K562 (cell line): ENCODE measurements at regions of chr14 and their contacts with region 1.

Region 1: DNA sequence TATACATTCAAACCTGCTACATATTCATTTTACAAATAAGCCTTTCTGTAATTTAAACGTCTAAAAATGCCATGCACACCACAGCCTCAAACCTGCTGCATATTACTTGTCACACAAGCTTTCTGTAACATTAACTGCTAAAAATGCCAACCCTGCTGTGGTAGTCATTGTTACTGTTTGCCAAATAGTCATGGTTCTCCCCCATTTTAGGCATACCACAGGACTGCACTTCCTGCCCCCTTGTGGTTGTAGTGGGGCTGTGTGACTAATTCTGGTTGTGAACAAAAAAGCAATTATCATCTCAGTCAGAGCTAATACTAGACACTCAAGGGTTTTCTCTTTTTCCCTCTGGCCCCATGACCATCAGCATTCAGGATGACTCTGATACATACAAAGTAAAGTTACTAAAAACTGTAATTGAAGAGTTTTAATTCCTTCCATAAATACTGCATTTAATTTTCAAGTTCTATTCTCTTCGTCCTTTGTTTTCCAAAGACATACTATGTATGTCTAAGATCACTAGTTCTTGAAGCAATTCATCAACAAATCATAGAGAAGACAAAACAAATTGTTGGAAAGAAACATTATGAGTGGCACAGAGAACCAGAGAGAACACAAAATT is 5.7 kb upstream of the SLC35F4 start:
- DNase-seq: peak; percentile 7 to 27 (median 20)
- ATAC-seq: peak; percentile 81
- H3K4me3 ChIP-seq: no peak overlapping the region
- H3K27ac ChIP-seq: no peak overlapping the region
- H3K4me1 ChIP-seq: no peaks in the 10 kb centered on the region
- H3K27me3 ChIP-seq: no peaks in the 10 kb centered on the region
- CTCF ChIP-seq: peak; percentile 42 to 50 (median 45)
- EP300 ChIP-seq: no peak
- POLR2A ChIP-seq: no peak
- RAD21 ChIP-seq: peak in 1 of 2 experiments; percentile 32; a peak in 1 of 4 replicates

Region 2: DNA sequence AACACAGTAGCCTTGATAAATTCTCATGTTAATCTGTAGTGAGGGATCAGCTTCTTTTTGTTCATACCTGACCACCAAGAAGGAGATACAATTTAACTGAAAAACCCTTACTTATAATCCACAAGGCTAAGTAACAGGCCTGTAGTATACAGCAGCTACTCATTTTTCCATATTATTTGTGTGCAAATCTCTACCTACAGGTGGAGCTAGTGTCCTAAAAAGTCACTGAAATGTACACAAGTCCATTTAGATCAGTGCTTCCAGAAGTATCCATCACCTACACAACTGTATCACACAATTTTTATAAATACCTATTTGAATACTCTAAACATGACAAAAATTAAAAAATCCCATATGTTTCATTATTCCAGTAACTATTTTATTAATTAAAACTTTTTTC is 178.9 kb before region 1 on chr14:
- CTCF ChIA-PET with region 1: no interaction called
- POLR2A ChIA-PET with region 1: no interaction called
- in situ Hi-C with region 1: no loop called
- intact Hi-C with region 1: loop called (anchors 5 kb)
- DNase-seq: peak; percentile 6 to 20 (median 8)
- ATAC-seq: peak; percentile 46; the same call in 1 of the 3 replicates
- H3K4me3 ChIP-seq: no peak overlapping the region
- H3K27ac ChIP-seq: no peak overlapping the region
- H3K4me1 ChIP-seq: no peaks in the 10 kb centered on the region
- H3K27me3 ChIP-seq: no peaks in the 10 kb centered on the region
- CTCF ChIP-seq: peak in 2 of 3 experiments; percentile 18 to 37; a peak in 2 of 6 replicates
- EP300 ChIP-seq: no peak
- POLR2A ChIP-seq: no peak
- RAD21 ChIP-seq: peak in 1 of 2 experiments; percentile 37; a peak in 1 of 4 replicates

Region 3: GRCh38 chr14:57833323-57833722 is 38.2 kb before region 1 on chr14:
- CTCF ChIA-PET with region 1: no interaction called
- POLR2A ChIA-PET with region 1: no interaction called
- in situ Hi-C with region 1: no loop called
- intact Hi-C with region 1: no loop called
- DNase-seq: no peak
- ATAC-seq: no peak
- H3K4me3 ChIP-seq: no peak overlapping the region
- H3K27ac ChIP-seq: no peak overlapping the region
- H3K4me1 ChIP-seq: no peaks in the 10 kb centered on the region
- H3K27me3 ChIP-seq: no peaks in the 10 kb centered on the region
- CTCF ChIP-seq: no peak
- EP300 ChIP-seq: no peak
- POLR2A ChIP-seq: no peak
- RAD21 ChIP-seq: no peak

Region 4: DNA sequence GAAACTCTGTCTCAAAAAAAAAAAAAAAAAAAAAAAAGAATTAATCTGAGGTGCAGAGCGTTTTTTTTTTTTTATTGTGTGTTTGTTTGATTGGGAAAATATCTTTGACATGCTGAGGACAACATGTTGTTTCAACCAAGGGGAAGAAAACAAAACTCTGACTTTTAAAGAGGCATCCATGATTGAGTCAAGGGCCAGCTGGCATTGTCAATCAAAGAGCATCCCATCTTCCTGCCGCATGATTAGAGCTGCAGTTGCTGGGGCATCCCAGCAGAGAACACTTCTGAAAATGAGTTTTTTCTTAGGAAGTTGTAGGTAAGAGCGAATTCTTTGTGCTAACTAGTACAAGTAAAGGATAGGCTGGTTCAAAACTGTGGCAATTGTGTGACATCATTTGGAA is 1116.0 kb after region 1 on chr14:
- CTCF ChIA-PET with region 1: no interaction called
- POLR2A ChIA-PET with region 1: no interaction called
- in situ Hi-C with region 1: no loop called
- intact Hi-C with region 1: no loop called
- DNase-seq: no peak
- ATAC-seq: no peak
- H3K4me3 ChIP-seq: no peak overlapping the region
- H3K27ac ChIP-seq: no peak overlapping the region
- H3K4me1 ChIP-seq: no peaks in the 10 kb centered on the region
- H3K27me3 ChIP-seq: no peaks in the 10 kb centered on the region
- CTCF ChIP-seq: no peak
- EP300 ChIP-seq: no peak
- POLR2A ChIP-seq: no peak
- RAD21 ChIP-seq: no peak